ENCODE measurements at regions of chr12 and their contacts with region 1.

Region 1: DNA sequence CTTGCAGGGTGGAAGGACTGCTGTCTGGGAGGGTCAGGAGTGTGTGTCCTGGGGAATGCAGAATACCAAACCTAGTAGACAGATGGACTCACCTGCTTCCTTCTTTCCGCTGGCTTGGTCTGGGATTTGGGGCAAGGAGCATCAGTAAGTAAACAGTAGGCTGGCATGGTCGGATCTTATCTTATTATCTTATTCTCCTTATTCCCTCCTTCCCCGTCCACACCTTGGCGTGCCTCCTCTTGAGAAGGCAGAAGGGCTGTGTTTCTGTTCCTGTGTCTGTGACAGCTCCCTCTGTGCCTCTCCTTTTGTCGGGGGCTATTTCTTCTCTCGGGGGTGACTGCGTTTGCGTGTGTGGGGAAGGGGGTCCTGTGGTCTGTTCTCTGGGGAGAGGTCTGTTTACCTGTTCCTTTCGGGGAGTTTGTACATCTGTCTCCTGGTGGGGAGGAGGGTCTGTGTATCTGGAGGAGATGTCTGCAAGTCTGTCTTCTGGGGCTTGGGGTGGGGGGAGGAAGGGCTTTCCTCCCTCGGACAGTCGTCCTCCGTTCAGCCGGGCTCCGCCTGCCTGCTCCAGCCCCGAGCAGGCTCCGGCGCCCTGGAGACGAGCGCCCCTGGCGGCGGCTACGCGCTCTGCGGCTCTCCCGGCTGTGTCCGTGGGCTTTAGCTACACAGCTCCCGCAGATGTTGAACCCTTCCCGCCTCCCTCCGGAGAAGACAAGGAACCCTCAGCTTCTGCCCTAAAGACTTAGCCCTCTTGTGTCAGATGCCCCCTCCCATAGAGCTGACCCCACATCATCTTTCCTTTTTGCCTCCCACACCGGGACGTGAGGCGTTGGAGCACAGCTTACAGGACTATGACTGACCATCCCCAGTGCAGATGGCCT is 4.3 kb downstream of the KRT86 start:
- DNase-seq: peak; percentile 77
- H3K4me3 Mint-ChIP-seq: peak overlapping the region; percentile 66
- H3K27ac Mint-ChIP-seq: peak overlapping the region; percentile 98
- H3K4me1 Mint-ChIP-seq: peaks cover 40% of the 10 kb centered on the region
- H3K27me3 Mint-ChIP-seq: no peaks in the 10 kb centered on the region
- CTCF ChIP-seq: peak; percentile 98

Region 2: DNA sequence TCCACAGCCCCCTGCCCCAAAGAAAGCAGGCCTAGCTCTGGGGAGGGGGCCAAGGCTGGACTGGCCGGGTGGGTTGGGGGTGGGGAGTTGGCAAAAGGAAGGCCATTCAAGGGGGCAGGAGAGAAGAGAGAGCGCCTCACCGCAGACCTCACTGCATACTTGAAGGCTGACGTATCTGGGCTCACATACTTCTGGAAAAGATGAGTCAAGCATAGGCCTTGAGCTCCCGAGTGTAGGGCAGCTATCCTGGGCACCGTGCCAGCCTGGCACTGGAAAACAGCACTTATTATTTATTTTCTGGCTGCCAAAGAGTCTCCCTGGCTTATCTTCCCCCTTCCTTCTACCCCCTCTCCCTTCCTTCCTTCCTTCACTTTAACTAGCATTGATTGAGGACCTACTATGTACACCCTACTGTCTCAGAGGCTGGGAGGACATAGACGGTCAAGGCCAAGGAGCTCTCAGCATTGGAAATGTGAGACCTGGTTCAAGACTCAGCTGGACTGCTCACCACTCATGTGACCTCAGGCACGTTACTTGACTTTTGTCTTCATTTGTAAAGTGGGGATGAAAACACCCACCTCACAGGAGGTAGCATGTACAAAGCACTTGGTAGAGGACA is 86.5 kb before region 1 on chr12:
- CTCF ChIA-PET with region 1: interaction called, 6 read pairs
- POLR2A ChIA-PET with region 1: interaction called, 9 read pairs
- intact Hi-C with region 1: loop called (anchors 1 kb)
- DNase-seq: peak; percentile 98
- H3K4me3 Mint-ChIP-seq: no peak overlapping the region
- H3K27ac Mint-ChIP-seq: peak overlapping the region; percentile 94
- H3K4me1 Mint-ChIP-seq: peaks cover 48% of the 10 kb centered on the region
- H3K27me3 Mint-ChIP-seq: no peaks in the 10 kb centered on the region
- CTCF ChIP-seq: no peak

Region 3: DNA sequence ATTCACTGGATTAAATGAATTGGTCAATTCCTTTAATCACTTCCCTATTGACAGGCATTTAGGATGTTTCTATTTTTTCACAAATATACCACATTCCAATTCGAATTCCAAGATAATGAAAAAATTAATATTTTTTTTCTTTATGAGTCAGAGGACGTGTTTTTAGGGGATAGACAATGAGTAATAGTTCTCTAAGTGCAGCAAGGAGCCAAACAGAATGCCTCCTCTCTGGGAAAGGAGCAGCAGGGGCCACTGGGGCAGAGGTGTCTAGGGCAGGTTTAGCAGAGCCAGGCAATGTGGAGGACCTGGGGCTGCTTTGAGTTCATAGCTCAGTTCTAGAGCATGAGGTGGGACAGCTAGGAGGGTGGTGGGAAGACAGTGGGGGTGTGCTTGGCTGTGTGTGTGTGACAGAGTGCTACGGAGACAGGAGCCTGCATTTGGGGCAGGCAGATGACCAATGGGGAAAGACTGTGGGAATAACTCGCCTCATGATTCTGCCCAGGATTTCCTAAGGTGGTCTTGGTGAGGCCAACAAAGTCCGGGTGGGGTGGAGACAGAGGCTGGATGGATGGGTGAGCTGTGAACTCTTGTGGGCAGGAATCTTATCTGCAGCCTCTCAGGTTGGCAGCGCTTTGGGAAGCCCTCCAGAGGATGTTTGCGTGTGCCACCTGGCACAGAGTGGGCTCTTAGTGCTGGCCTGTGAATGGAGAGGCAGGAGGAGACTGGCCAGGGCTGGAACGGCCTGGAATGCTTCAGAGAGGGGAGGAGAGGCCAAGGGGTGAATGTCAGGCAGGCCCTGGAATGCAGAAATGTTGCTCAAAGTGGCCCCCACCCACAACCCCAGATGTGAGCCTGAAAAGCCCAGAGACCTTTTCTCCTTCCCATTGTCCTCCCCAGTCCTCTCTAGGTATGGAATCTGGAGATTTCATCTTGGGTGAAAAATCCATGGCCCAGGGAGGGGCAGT is 48.2 kb before region 1 on chr12:
- CTCF ChIA-PET with region 1: interaction called, 70 read pairs
- POLR2A ChIA-PET with region 1: interaction called, 28 read pairs
- intact Hi-C with region 1: loop called (anchors 2 kb)
- DNase-seq: peak; percentile 86
- H3K4me3 Mint-ChIP-seq: peak overlapping the region; percentile 91
- H3K27ac Mint-ChIP-seq: peak overlapping the region; percentile 91
- H3K4me1 Mint-ChIP-seq: peaks cover 54% of the 10 kb centered on the region
- H3K27me3 Mint-ChIP-seq: no peaks in the 10 kb centered on the region
- CTCF ChIP-seq: no peak

Region 4: DNA sequence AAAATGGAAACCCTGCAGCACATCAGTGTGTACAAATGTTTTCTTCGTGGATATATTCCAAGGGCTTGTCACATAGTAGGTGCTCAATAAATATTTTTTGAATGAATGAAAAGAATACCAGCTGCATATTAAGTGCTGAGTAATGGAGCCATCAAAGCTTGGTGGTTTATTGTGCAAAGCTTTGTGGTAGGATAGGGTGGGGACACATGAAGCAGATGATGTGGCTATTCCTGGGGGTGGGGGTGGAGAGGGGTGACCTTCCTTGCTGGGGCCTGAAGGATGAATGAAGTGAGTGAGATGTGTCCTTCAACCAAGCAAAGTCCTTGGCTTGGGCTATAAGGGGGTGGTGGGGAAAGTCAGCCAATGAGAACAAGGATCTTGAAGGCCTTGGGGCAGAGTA is 16.9 kb after region 1 on chr12:
- CTCF ChIA-PET with region 1: interaction called, 9 read pairs
- POLR2A ChIA-PET with region 1: interaction called, 18 read pairs
- intact Hi-C with region 1: no loop called
- DNase-seq: no peak
- H3K4me3 Mint-ChIP-seq: no peak overlapping the region
- H3K27ac Mint-ChIP-seq: no peak overlapping the region
- H3K4me1 Mint-ChIP-seq: peaks cover 7% of the 10 kb centered on the region
- H3K27me3 Mint-ChIP-seq: no peaks in the 10 kb centered on the region
- CTCF ChIP-seq: no peak

Region 5: GRCh38 chr12:52344137-52344536 is 65.4 kb after region 1 on chr12:
- CTCF ChIA-PET with region 1: interaction called, 15 read pairs
- POLR2A ChIA-PET with region 1: interaction called, 22 read pairs
- intact Hi-C with region 1: no loop called
- DNase-seq: no peak
- H3K4me3 Mint-ChIP-seq: no peak overlapping the region
- H3K27ac Mint-ChIP-seq: no peak overlapping the region
- H3K4me1 Mint-ChIP-seq: peaks cover 9% of the 10 kb centered on the region
- H3K27me3 Mint-ChIP-seq: no peaks in the 10 kb centered on the region
- CTCF ChIP-seq: no peak

Region 6: DNA sequence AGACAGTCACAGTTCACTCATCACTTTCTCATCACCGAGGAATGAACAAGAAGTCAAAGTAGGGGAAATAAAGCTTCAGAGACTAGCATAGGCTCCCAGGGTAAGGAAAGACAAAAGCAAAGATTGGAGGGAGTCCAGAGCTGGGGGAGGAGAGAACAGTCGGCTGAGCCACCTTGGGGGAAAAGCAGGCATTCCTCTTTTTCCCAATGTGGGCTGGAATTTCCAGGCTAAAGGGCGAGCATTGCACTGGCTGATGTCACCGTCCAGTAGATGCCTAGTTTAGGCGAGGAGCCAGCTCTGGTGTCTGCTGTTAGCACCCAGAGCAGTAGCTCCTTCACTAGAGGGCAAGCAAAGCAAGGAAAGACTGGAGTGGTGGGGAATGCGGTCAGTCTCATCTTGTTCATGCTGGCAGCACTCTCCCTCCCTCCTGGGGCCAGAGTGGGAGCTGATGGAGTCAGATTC is 163.8 kb after region 1 on chr12:
- CTCF ChIA-PET with region 1: no interaction called
- POLR2A ChIA-PET with region 1: no interaction called
- intact Hi-C with region 1: no loop called
- DNase-seq: peak; percentile 98
- H3K4me3 Mint-ChIP-seq: no peak overlapping the region
- H3K27ac Mint-ChIP-seq: no peak overlapping the region
- H3K4me1 Mint-ChIP-seq: peaks cover 35% of the 10 kb centered on the region
- H3K27me3 Mint-ChIP-seq: no peaks in the 10 kb centered on the region
- CTCF ChIP-seq: no peak

Measured in MCF 10A (cell line).